ENCODE measurements at regions of chr20 and their contacts with region 1.

Region 1: GRCh38 chr20:8722276-8722928 is 346.5 kb upstream of the PLCB4 start:
- DNase-seq: peak; percentile 65
- H3K4me3 ChIP-seq: no peak overlapping the region
- H3K27ac ChIP-seq: no peak overlapping the region
- H3K27me3 ChIP-seq: no peaks in the 10 kb centered on the region
- CTCF ChIP-seq: peak; percentile 83

Region 2: GRCh38 chr20:7926767-7927166 is 795.6 kb before region 1 on chr20:
- CTCF ChIA-PET with region 1: interaction called, 323 read pairs
- POLR2A ChIA-PET with region 1: no interaction called
- DNase-seq: no peak
- H3K4me3 ChIP-seq: no peak overlapping the region
- H3K27ac ChIP-seq: no peak overlapping the region
- H3K27me3 ChIP-seq: no peaks in the 10 kb centered on the region
- CTCF ChIP-seq: peak; percentile 69

Region 3: DNA sequence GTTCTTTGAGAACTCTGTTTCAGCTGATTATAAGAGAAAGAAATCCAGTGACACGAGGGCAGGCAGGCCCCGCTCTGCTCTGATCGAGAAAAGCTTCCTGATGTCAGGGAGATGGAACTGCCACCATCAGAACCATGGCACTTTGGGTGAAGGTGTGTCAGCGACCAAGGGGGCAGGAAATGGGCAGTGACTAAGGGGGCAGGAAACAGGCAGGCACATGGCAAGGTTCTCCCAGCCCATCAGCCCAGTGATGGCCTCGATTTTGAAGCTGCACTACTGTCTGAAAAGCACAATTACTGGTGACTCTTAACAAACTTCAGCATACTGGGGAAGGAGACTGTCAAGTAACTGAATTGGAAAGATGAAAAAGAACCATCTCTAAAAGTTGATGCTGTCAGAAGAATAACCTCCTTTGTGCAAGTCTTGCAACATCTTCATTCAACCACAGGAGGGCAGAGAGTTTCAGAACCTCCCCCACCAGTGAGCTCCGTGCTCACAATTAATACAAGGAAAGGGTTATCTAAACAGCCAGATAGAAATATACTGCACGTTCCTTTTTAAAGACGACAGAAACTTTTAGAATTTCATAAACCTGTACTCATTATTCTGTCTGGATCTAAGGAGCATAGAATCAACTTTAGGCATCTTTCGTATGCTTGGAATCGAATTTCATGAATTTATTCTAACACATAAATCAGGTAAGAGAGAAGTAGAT is 741.9 kb before region 1 on chr20:
- CTCF ChIA-PET with region 1: interaction called, 113 read pairs
- POLR2A ChIA-PET with region 1: no interaction called
- DNase-seq: peak; percentile 24
- H3K4me3 ChIP-seq: no peak overlapping the region
- H3K27ac ChIP-seq: no peak overlapping the region
- H3K27me3 ChIP-seq: no peaks in the 10 kb centered on the region
- CTCF ChIP-seq: peak; percentile 71

Region 4: DNA sequence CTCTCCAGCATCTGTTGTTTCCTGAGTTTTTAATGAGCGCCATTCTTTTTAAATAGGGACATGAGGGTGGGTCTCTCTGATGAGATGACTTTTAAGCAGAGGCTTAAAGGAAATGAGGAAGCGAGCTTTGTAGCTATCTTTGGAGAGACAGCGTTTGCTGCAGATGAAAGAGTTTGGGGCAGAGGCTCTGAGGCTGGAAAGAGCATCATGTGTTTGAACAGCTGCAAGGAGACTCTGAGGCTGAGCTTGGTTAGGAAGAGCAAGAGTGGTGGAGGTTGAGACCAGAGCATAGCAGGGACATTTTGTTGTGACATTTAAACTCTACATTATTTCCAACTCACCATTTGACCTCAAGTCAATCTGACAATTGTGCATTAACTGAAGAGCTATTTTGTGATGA is 664.5 kb before region 1 on chr20:
- CTCF ChIA-PET with region 1: interaction called, 384 read pairs
- POLR2A ChIA-PET with region 1: no interaction called
- DNase-seq: no peak
- H3K4me3 ChIP-seq: no peak overlapping the region
- H3K27ac ChIP-seq: no peak overlapping the region
- H3K27me3 ChIP-seq: no peaks in the 10 kb centered on the region
- CTCF ChIP-seq: no peak

Region 5: DNA sequence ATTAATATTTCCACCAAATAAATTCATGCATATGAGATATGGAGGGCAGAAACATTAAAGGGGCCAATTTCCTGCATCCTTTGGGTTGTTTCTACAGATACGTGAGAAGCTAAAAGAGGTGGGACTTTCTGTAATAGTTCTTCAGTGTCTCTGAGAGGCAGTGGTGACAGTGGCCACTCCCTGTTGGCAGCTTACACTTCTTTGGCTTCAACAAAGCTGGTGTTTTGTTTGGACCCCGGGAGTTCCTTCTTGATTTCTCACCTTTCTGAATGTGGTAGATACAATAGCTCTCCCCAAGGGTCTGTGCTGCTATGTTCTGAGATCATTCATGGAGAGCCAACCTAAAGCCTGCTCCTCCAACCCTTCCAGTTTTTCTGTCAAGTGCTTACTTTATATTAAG is 582.5 kb before region 1 on chr20:
- CTCF ChIA-PET with region 1: interaction called, 45 read pairs
- POLR2A ChIA-PET with region 1: no interaction called
- DNase-seq: no peak
- H3K4me3 ChIP-seq: no peak overlapping the region
- H3K27ac ChIP-seq: no peak overlapping the region
- H3K27me3 ChIP-seq: no peaks in the 10 kb centered on the region
- CTCF ChIP-seq: no peak

Region 6: GRCh38 chr20:8527998-8528723 is 194.2 kb before region 1 on chr20:
- CTCF ChIA-PET with region 1: interaction called, 16 read pairs
- POLR2A ChIA-PET with region 1: no interaction called
- DNase-seq: peak; percentile 51
- H3K4me3 ChIP-seq: no peak overlapping the region
- H3K27ac ChIP-seq: peak overlapping the region; percentile 25
- H3K27me3 ChIP-seq: no peaks in the 10 kb centered on the region
- CTCF ChIP-seq: no peak

Region 7: GRCh38 chr20:8735674-8736073 is 13.3 kb after region 1 on chr20:
- CTCF ChIA-PET with region 1: interaction called, 37 read pairs
- POLR2A ChIA-PET with region 1: interaction called, 4 read pairs
- DNase-seq: no peak
- H3K4me3 ChIP-seq: no peak overlapping the region
- H3K27ac ChIP-seq: no peak overlapping the region
- H3K27me3 ChIP-seq: no peaks in the 10 kb centered on the region
- CTCF ChIP-seq: no peak

Region 8: GRCh38 chr20:9038791-9039535 is 316.6 kb after region 1 on chr20:
- CTCF ChIA-PET with region 1: no interaction called
- POLR2A ChIA-PET with region 1: no interaction called
- DNase-seq: no peak
- H3K4me3 ChIP-seq: no peak overlapping the region
- H3K27ac ChIP-seq: no peak overlapping the region
- H3K27me3 ChIP-seq: no peaks in the 10 kb centered on the region
- CTCF ChIP-seq: no peak